Endothelial cell of umbilical vein (primary cell): ENCODE measurements at regions of chrX and their contacts with region 1.

Region 1: GRCh38 chrX:136953867-136954787 is 73.6 kb upstream of the RBMX start:
- DNase-seq: peak; percentile 51
- H3K4me3 ChIP-seq: no peak overlapping the region
- H3K27ac ChIP-seq: no peak overlapping the region
- H3K4me1 ChIP-seq: no peaks in the 10 kb centered on the region
- H3K27me3 ChIP-seq: no peaks in the 10 kb centered on the region
- CTCF ChIP-seq: peak; percentile 51 to 68
- POLR2A ChIP-seq: no peak

Region 2: GRCh38 chrX:136405126-136405525 is 549.0 kb before region 1 on chrX:
- CTCF ChIA-PET with region 1: no interaction called
- POLR2A ChIA-PET with region 1: no interaction called
- dilution Hi-C with region 1: no loop called
- intact Hi-C with region 1: no loop called
- DNase-seq: no peak
- H3K4me3 ChIP-seq: no peak overlapping the region
- H3K27ac ChIP-seq: no peak overlapping the region
- H3K4me1 ChIP-seq: no peaks in the 10 kb centered on the region
- H3K27me3 ChIP-seq: no peaks in the 10 kb centered on the region
- CTCF ChIP-seq: no peak
- POLR2A ChIP-seq: no peak

Region 3: DNA sequence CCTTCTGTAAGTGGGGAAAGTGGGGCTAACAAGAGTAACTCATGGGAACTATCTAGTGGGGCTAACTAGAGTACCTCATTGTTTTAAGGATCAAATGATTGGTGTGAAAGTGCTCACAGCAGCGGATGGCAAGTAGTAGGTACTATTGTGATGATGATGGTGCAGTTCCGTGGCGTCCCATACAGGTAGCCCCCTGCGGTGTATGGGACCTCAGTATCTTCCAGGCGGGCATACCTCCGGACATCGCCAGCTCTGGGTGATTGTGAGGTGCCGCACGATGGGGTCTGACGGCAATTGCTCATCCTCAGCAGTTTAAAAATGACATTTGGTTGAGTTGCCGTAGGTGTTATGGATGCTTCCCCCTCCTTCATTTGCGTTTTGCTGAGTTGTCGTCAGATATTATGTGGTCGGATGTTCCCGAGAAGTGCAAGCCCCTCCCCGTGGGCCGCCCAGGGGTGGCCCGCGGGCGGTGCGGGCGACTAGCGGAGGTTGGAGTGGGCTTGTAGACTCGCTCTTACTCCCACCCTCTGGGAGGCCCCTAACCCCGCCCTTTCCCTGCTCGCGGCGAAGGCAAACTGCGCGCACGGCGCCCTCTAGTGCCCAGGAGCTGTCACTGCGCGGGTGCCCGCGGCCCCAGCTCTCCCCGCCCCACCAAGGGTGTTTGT is 98.0 kb after region 1 on chrX:
- CTCF ChIA-PET with region 1: interaction called, 11 read pairs
- POLR2A ChIA-PET with region 1: no interaction called
- dilution Hi-C with region 1: no loop called
- intact Hi-C with region 1: loop called (anchors 1 kb)
- DNase-seq: peak; percentile 41
- H3K4me3 ChIP-seq: peak overlapping the region in 2 of 3 experiments; percentile 26 to 28
- H3K27ac ChIP-seq: no peak overlapping the region
- H3K4me1 ChIP-seq: no peaks in the 10 kb centered on the region
- H3K27me3 ChIP-seq: peaks cover 9 to 23% of the 10 kb centered on the region in 2 experiments
- CTCF ChIP-seq: peak; percentile 70 to 91
- POLR2A ChIP-seq: no peak